Posterior vena cava (tissue), 2 donors: ENCODE measurements at regions of chr16 and their contacts with region 1.

Region 1: GRCh38 chr16:57519796-57520360 is 16.5 kb downstream of the CCDC102A start:
- DNase-seq: peak; percentile 93

Region 2: DNA sequence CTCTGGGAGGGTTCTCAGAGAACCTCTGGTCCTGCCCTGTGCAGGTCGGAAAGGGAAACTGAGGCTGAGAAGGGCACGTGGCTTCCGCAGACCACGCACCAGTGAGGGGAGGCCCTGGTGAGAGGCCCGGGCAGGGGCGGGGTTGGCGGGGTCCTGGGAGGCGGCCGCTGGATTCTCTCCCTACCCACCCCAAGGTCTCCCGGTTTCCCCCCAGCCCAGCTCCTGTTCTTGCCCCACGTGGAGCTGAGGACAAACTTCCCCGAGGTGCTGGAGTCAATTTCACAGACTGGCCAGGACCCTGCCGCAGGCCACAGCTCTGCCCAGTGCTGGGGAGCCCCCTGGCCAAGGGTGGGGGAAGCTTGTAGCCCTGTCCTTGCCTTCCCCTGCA is 103.8 kb before region 1 on chr16:
- intact Hi-C with region 1: loop called in 1 of 2 experiments (anchors 5 kb)
- DNase-seq: no peak

Region 3: DNA sequence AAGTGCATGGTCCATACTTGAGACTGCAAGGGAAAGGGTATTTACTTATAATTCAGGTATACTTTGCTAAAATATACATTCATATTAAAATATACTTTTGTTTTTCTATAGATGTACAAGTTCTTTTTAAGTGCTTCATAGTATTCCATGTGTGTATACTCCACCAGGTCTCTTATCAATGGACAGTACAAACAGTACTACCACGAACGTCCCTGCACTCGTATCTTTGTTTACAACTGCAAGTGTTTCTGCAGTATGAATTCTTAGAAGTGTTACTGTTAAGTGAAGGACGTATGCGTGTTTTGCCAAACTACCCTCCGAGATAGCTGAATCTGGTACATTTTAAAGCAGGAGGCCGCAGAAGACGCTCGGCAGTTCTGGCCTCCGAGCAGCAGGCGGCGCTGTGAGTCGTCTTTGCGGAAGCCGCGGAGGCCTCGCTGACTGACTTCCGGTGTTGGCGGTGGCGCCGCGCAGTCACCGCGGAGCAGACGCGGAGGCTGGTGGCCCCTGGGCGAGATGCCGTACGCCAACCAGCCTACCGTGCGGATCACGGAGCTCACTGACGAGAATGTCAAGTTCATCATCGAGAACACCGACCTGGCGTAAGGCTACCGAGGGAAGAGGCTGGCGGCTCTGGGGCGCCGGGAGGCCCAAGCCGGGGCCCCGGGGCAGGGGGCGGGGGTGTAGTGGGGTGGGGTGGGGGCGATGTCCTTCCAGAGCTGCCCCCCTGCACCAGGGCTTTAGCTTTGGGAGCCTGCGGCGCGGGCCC is 57.5 kb before region 1 on chr16 and contains the start of gene POLR2C:
- intact Hi-C with region 1: loop called in 1 of 2 experiments (anchors 5 kb)
- DNase-seq: peak; percentile 97
- total RNA-seq, gene POLR2C: 39.4 to 40.3 TPM

Region 4: GRCh38 chr16:57475711-57476339 is 44.1 kb before region 1 on chr16:
- intact Hi-C with region 1: loop called in 1 of 2 experiments (anchors 5 kb)
- DNase-seq: no peak

Region 5: GRCh38 chr16:57576429-57576870 is 56.6 kb after region 1 on chr16:
- intact Hi-C with region 1: no loop called
- DNase-seq: peak; percentile 91